Activated CD4-positive, alpha-beta memory T cell treated with anti-CD3 and anti-CD28 coated beads, Interleukin-2, amount 10 ng/mL, durations not matched to agents 7 days and 5 days (primary cell): ENCODE measurements at regions of chr1 and their contacts with region 1.

Region 1: DNA sequence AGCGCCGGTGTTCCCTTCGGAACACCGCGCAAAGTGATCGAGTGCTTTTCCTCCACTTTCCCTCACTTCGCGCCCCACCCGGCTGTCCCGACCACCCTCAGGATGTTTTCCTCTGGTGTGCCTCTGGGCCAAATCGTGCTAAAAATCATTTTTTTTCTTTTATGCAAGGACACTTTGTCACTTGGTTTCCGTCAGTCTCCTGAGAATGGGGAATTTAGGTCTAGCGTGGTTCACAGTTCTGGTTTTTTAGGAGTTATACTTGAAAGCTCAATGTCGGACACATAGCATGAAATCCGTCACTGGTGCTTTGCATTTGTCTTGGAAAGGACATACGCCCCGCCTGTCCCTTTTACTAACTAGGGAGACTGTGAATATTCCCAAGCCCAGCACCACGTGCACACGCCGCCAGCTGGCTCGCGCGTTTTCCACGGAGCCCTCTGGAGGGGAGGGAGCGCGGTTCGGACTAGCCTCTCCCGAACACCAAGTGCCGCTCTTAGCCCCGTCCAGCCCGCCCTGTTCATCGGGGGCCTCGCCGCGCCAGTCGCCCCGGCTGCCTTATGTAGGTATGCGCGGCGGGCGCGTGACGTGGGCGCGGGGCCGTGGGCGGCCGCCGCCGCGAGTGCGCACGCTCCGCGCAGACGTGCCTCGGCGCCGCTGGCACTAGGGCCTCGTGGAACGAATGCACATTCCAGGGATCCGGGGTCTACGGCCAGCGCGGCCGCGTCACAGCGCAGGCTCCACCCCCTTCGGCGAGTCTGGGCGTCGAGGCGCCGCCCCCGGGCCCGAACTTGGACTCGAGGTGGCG is 572 bp upstream of the IRF2BP2 start:
- DNase-seq: peak; percentile 90
- H3K4me3 Mint-ChIP-seq: peak overlapping the region; percentile 82
- H3K27ac Mint-ChIP-seq: peak overlapping the region; percentile 95
- H3K4me1 Mint-ChIP-seq: peaks cover 44% of the 10 kb centered on the region
- H3K27me3 Mint-ChIP-seq: no peaks in the 10 kb centered on the region

Region 2: GRCh38 chr1:234499119-234499942 is 111.2 kb before region 1 on chr1:
- CTCF ChIA-PET with region 1: interaction called, 12 read pairs
- POLR2A ChIA-PET with region 1: interaction called, 7 read pairs
- DNase-seq: peak; percentile 88
- H3K4me3 Mint-ChIP-seq: peak overlapping the region; percentile 6
- H3K27ac Mint-ChIP-seq: peak overlapping the region; percentile 66
- H3K4me1 Mint-ChIP-seq: peaks cover 62% of the 10 kb centered on the region
- H3K27me3 Mint-ChIP-seq: no peaks in the 10 kb centered on the region

Region 3: DNA sequence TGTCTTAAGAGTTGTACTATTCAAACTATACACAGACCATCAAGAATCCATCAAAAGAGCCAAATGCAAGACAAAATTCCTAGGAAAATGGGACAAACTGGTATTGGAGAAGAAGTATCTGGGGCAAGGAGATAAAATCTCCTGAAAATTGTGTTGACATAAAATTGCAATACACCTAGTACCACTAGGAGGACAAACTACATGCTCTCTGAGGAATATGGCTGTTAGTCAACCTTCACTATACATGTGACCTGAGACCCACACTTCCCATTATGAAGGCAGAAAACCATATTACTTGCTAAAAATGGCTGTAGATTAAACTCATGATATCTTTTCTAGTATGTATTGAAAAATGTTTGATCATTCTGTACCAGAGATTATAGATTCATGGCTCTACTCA is 30.6 kb before region 1 on chr1:
- CTCF ChIA-PET with region 1: no interaction called
- POLR2A ChIA-PET with region 1: no interaction called
- DNase-seq: no peak
- H3K4me3 Mint-ChIP-seq: no peak overlapping the region
- H3K27ac Mint-ChIP-seq: no peak overlapping the region
- H3K4me1 Mint-ChIP-seq: peaks cover 18% of the 10 kb centered on the region
- H3K27me3 Mint-ChIP-seq: peaks cover 2% of the 10 kb centered on the region

Region 4: GRCh38 chr1:234629026-234629425 is 18.5 kb after region 1 on chr1:
- CTCF ChIA-PET with region 1: no interaction called
- POLR2A ChIA-PET with region 1: no interaction called
- DNase-seq: no peak
- H3K4me3 Mint-ChIP-seq: no peak overlapping the region
- H3K27ac Mint-ChIP-seq: no peak overlapping the region
- H3K4me1 Mint-ChIP-seq: peaks cover 10% of the 10 kb centered on the region
- H3K27me3 Mint-ChIP-seq: no peaks in the 10 kb centered on the region

Region 5: GRCh38 chr1:234722904-234723720 is 112.6 kb after region 1 on chr1:
- CTCF ChIA-PET with region 1: interaction called, 29 read pairs
- POLR2A ChIA-PET with region 1: interaction called, 180 read pairs
- DNase-seq: peak; percentile 51
- H3K4me3 Mint-ChIP-seq: peak overlapping the region; percentile 76
- H3K27ac Mint-ChIP-seq: peak overlapping the region; percentile 89
- H3K4me1 Mint-ChIP-seq: peaks cover 67% of the 10 kb centered on the region
- H3K27me3 Mint-ChIP-seq: no peaks in the 10 kb centered on the region

Region 6: DNA sequence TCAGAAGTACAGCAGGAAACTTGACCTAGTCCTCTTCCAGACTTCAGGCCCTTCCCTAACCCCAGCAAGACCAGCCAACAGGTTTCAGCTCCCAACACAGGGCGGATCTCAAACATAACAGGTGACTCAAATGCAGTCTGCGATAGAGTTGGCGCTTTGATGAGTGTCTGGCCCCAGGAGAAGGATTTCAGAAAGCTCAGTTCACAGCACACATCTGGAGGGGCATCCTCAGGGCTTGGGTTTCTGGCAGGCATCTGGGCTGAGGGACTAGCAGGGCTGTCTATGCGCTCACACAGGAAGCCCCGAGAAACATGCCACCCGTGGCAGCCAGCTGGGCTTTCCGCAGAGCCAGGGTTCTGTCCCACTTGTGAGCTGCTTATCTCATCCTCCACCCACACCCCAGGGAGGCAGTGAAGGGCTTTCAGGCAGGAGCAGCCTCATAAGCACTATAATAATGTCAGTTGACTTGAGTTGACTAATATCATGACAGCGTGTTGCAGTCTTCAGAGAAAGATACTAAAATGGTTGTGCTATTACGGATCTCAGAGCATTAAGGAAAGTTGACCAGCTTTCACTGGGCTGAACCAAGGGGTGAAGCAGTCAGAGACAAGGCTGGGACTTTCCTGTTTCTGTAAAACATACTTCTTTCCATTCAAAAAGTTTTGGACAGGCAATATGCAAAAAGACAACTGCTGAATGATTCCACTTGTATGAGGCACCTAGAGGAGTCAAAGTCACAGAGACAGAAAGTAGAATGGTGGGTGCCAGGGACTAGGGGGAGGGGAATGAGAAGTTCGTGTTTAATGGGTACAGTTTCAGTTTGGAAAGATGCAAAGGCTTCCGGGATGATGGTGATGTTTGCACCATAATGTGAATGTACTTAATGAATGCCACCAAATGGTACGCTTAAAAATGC is 232.4 kb after region 1 on chr1:
- CTCF ChIA-PET with region 1: interaction called, 3 read pairs
- POLR2A ChIA-PET with region 1: interaction called, 67 read pairs
- DNase-seq: peak; percentile 73
- H3K4me3 Mint-ChIP-seq: peak overlapping the region; percentile 61
- H3K27ac Mint-ChIP-seq: peak overlapping the region; percentile 90
- H3K4me1 Mint-ChIP-seq: peaks cover 79% of the 10 kb centered on the region
- H3K27me3 Mint-ChIP-seq: peaks cover 2% of the 10 kb centered on the region

Region 7: GRCh38 chr1:234963180-234963903 is 352.8 kb after region 1 on chr1:
- CTCF ChIA-PET with region 1: no interaction called
- POLR2A ChIA-PET with region 1: interaction called, 12 read pairs
- DNase-seq: peak; percentile 92
- H3K4me3 Mint-ChIP-seq: peak overlapping the region; percentile 38
- H3K27ac Mint-ChIP-seq: peak overlapping the region; percentile 89
- H3K4me1 Mint-ChIP-seq: peaks cover 65% of the 10 kb centered on the region
- H3K27me3 Mint-ChIP-seq: no peaks in the 10 kb centered on the region

Region 8: GRCh38 chr1:235047331-235047871 is 436.9 kb after region 1 on chr1:
- CTCF ChIA-PET with region 1: no interaction called
- POLR2A ChIA-PET with region 1: interaction called, 10 read pairs
- DNase-seq: no peak
- H3K4me3 Mint-ChIP-seq: no peak overlapping the region
- H3K27ac Mint-ChIP-seq: peak overlapping the region; percentile 84
- H3K4me1 Mint-ChIP-seq: peaks cover 50% of the 10 kb centered on the region
- H3K27me3 Mint-ChIP-seq: no peaks in the 10 kb centered on the region